Left lung (tissue), 14 donors: ENCODE measurements at regions of chr6 and their contacts with region 1.

Region 1: DNA sequence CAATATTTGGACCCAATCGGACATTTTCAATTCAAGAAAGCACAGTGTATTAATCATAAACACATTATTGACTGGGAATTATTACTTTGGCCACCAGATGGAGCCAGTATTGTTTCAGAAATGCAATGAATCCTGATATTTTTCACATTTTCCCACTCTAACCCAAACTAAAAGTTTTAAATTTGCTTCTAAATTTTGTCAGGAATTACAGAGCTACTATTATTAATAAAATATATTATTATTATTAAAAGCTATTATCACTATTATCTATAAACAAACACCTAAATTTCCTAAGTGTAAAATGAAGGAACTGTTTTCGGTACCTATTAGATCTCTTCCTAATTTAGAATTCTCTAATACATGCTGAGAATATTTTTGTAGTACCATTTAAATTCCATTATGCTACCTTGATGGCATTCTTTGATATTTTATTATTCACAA is 245.3 kb downstream of the OGFRL1 start:
- DNase-seq: peak in 1 of 4 donors; percentile 24
- ATAC-seq: no peak
- H3K4me3 ChIP-seq: no peak overlapping the region
- H3K27ac ChIP-seq: no peak overlapping the region
- H3K4me1 ChIP-seq: no peaks in the 10 kb centered on the region
- H3K27me3 ChIP-seq: no peaks in the 10 kb centered on the region
- CTCF ChIP-seq: peak; percentile 39 to 77

Region 2: DNA sequence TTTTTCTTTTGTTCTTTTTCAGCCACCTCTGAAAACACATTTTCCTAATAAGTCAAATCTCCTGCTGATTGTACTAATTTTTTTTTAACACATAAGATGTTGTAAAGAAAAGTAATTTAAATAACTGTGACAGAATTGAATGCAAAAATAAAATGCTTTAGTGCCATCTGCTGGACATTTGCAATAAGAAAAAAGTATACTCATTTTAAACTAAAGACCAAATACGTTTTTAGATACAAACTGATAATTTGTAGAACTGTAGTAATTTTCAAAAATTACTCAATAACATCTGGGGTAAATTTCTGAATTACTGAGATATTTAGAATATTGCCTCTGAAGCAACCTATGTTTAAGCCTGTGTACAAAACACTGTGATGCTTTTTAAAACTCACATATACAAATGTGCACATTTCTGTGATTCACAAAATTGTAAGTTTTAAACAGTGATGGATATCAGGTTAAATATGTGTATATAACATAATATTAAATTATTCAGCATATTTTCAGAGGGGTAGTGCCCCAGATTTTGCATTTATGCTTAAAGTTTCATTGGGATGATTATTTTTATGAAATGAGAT is 551.1 kb after region 1 on chr6:
- intact Hi-C with region 1: loop called in 1 of 2 experiments (anchors 10 kb)
- DNase-seq: peak in 1 of 4 donors; percentile 35
- ATAC-seq: no peak
- H3K4me3 ChIP-seq: no peak overlapping the region
- H3K27ac ChIP-seq: no peak overlapping the region
- H3K4me1 ChIP-seq: no peaks in the 10 kb centered on the region
- H3K27me3 ChIP-seq: no peaks in the 10 kb centered on the region
- CTCF ChIP-seq: peak in 1 of 2 donors; percentile 47